GM12878 (cell line): ENCODE measurements at regions of chr22 and their contacts with region 1.

Region 1: DNA sequence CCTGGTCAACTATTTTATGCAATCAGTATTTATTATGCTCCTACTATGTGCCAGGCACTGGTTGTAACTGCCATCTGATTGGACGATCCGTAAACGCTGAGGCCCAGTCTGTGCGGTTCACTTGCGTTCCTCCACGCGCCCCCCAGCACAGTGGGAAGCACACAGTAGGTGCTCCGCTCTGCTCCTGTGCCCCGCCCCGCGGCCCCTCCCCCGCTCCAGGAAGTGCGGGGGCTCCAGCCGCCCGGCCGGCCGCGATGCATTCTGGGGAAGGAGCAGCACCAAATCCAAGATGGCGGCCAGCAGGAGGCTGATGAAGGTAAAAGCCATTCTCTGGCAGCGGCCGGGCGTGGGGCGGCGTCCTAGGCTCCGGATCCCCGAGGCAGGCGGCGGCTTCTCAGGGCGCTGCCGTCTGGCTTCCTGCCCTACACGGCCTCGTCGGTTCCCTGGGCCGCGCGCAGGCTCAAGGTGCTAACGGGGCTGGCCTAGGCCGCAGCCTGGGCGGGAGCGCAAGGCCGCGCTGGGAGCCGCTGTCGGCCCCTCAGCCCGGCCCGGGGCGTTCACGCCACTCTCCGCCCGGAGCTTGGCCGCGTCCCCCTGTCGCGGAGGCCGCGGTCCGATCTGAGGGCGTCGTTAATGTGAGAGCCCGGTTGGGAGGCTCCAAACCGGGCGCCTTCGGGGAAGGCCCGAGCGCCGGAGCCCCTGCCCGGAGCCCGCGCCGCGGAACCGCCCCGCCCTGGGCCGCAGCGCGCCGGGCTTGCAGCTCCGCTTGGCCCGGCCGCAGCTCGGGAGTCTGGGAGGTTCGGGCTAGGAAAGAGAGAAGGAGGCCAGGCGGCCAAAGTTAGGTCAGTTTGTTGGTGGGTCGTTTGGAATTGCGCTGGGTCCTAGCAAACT is at the start of gene UBE2L3:
- DNase-seq: no peak
- ATAC-seq: peak; percentile 83
- H3K4me3 ChIP-seq: peak within 1 kb of the TSS; percentile 96
- H3K27ac ChIP-seq: peak within 1 kb of the TSS; percentile 90
- H3K4me1 ChIP-seq: peaks cover 9% of the 10 kb centered on the region
- H3K27me3 ChIP-seq: no peaks in the 10 kb centered on the region
- CTCF ChIP-seq: no peak
- EP300 ChIP-seq: no peak
- POLR2A ChIP-seq: peak; percentile 93
- RAD21 ChIP-seq: no peak
- polyA plus RNA-seq, gene UBE2L3: 149 to 168 TPM

Region 2: GRCh38 chr22:21447694-21448402 is 119.9 kb before region 1 on chr22:
- CTCF ChIA-PET with region 1: no interaction called
- POLR2A ChIA-PET with region 1: no interaction called
- RAD21 ChIA-PET with region 1: no interaction called
- SMC1A ChIA-PET with region 1: no interaction called
- in situ Hi-C with region 1: no loop called
- intact Hi-C with region 1: no loop called
- DNase-seq: no peak
- ATAC-seq: peak; percentile 44
- H3K4me3 ChIP-seq: no peak overlapping the region
- H3K27ac ChIP-seq: no peak overlapping the region
- H3K4me1 ChIP-seq: no peaks in the 10 kb centered on the region
- H3K27me3 ChIP-seq: no peaks in the 10 kb centered on the region
- CTCF ChIP-seq: peak in 2 of 3 experiments; percentile 10 to 11; a peak in 1 of 6 replicates
- EP300 ChIP-seq: no peak
- POLR2A ChIP-seq: no peak
- RAD21 ChIP-seq: no peak

Region 3: GRCh38 chr22:21587803-21588611 is 20.3 kb after region 1 on chr22:
- CTCF ChIA-PET with region 1: interaction called, 4 read pairs
- POLR2A ChIA-PET with region 1: interaction called, 14 read pairs
- RAD21 ChIA-PET with region 1: interaction called, 8 read pairs
- SMC1A ChIA-PET with region 1: interaction called, 4 read pairs
- in situ Hi-C with region 1: no loop called
- intact Hi-C with region 1: loop called (anchors 2 kb)
- DNase-seq: peak; percentile 78
- ATAC-seq: peak; percentile 98
- H3K4me3 ChIP-seq: peak overlapping the region; percentile 41; the same call in 1 of the 2 replicates
- H3K27ac ChIP-seq: peak overlapping the region; percentile 49
- H3K4me1 ChIP-seq: peaks cover 26% of the 10 kb centered on the region
- H3K27me3 ChIP-seq: no peaks in the 10 kb centered on the region
- CTCF ChIP-seq: no peak
- EP300 ChIP-seq: peak in 1 of 2 experiments; percentile 80; a peak in 2 of 4 replicates
- POLR2A ChIP-seq: no peak
- RAD21 ChIP-seq: no peak

Region 4: DNA sequence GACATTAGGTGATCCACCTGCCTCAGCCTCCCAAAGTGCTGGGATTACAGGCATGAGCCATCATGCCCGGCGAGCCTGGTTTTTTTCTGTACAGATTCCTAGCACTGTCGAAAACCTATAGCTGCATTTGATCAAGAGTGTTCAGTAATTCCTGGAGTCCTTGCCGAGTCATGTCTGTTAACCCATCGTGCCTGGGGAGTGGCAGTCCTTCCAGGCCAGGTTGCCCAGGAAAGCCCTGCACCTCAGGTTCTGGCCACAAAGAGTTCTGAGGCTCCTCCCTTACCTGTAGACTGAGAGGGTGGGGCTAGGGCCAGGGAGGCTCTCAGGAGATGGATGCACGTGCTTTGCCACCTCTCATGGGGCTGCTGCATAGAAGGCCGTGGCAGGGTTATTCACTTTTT is 45.2 kb after region 1 on chr22:
- CTCF ChIA-PET with region 1: no interaction called
- POLR2A ChIA-PET with region 1: interaction called, 3 read pairs
- RAD21 ChIA-PET with region 1: no interaction called
- SMC1A ChIA-PET with region 1: no interaction called
- in situ Hi-C with region 1: no loop called
- intact Hi-C with region 1: loop called (anchors 5 kb)
- DNase-seq: no peak
- ATAC-seq: no peak
- H3K4me3 ChIP-seq: no peak overlapping the region
- H3K27ac ChIP-seq: no peak overlapping the region
- H3K4me1 ChIP-seq: no peaks in the 10 kb centered on the region
- H3K27me3 ChIP-seq: no peaks in the 10 kb centered on the region
- CTCF ChIP-seq: no peak
- EP300 ChIP-seq: no peak
- POLR2A ChIP-seq: no peak
- RAD21 ChIP-seq: no peak